Activated B cell treated with CpG ODN at 0.5 μM for 24 hours (primary cell): ENCODE measurements at regions of chr5 and their contacts with region 1.

Region 1: DNA sequence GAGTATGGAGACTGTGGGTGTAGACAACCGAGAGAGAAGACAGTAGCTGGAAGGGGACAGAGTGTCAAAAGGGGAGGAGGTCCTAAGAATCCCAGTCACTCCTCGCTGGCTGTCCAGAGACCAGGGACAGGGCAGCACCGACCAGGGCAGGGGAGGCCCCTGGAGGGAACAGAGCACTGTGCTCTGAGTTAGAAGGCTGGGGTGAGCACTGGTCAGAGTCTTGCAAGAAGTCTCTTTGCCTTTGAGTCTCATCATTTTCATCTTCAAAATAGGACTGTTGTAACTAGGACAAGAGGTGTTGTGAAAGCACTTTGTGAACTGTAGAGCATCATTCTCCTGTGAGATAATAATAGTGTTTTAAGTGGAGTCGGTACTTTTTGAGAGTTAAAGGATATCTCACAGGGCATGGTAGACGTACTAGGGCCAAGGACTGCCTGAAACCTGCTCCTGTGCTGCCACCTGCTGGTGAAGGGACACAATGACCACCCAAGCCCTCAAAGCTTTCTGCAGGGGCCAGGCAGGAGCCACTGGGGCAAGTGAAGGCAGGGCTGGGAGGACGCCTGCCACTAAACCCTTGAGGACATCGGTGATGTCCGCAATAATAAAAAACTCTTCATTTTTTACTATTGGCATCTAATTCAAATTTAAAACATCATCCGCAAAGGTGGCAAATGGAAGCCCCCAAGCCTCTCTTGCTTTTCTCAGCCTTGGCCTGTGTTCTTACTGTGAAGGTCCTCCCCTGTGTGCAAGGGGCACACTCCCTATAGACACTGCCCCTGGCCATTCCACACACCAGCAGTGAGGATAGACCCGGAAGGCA is 28.2 kb downstream of the SLC6A7 start:
- DNase-seq: peak; percentile 66
- ATAC-seq: peak; percentile 96
- H3K4me3 Mint-ChIP-seq: no peak overlapping the region
- H3K27ac Mint-ChIP-seq: no peak overlapping the region
- H3K4me1 Mint-ChIP-seq: peaks cover 1% of the 10 kb centered on the region
- H3K27me3 Mint-ChIP-seq: peaks cover 15% of the 10 kb centered on the region
- CTCF ChIP-seq: no peak

Region 2: GRCh38 chr5:149990518-149991376 is 227.3 kb before region 1 on chr5:
- CTCF ChIA-PET with region 1: interaction called, 5 read pairs
- POLR2A ChIA-PET with region 1: no interaction called
- intact Hi-C with region 1: loop called (anchors 2 kb)
- DNase-seq: peak; percentile 34
- ATAC-seq: peak; percentile 99
- H3K4me3 Mint-ChIP-seq: no peak overlapping the region
- H3K27ac Mint-ChIP-seq: no peak overlapping the region
- H3K4me1 Mint-ChIP-seq: no peaks in the 10 kb centered on the region
- H3K27me3 Mint-ChIP-seq: no peaks in the 10 kb centered on the region
- CTCF ChIP-seq: peak; percentile 95

Region 3: GRCh38 chr5:150129813-150130492 is 88.1 kb before region 1 on chr5:
- CTCF ChIA-PET with region 1: interaction called, 6 read pairs
- POLR2A ChIA-PET with region 1: no interaction called
- intact Hi-C with region 1: loop called (anchors 1 kb)
- DNase-seq: peak; percentile 29
- ATAC-seq: peak; percentile 84
- H3K4me3 Mint-ChIP-seq: no peak overlapping the region
- H3K27ac Mint-ChIP-seq: no peak overlapping the region
- H3K4me1 Mint-ChIP-seq: no peaks in the 10 kb centered on the region
- H3K27me3 Mint-ChIP-seq: no peaks in the 10 kb centered on the region
- CTCF ChIP-seq: peak; percentile 50

Region 4: GRCh38 chr5:150161242-150162141 is 56.6 kb before region 1 on chr5:
- CTCF ChIA-PET with region 1: interaction called, 3 read pairs
- POLR2A ChIA-PET with region 1: no interaction called
- intact Hi-C with region 1: loop called (anchors 1 kb)
- DNase-seq: peak; percentile 70
- ATAC-seq: peak; percentile 88
- H3K4me3 Mint-ChIP-seq: no peak overlapping the region
- H3K27ac Mint-ChIP-seq: no peak overlapping the region
- H3K4me1 Mint-ChIP-seq: peaks cover 19% of the 10 kb centered on the region
- H3K27me3 Mint-ChIP-seq: peaks cover 8% of the 10 kb centered on the region
- CTCF ChIP-seq: peak; percentile 65

Region 5: GRCh38 chr5:151298063-151298855 is 1080.2 kb after region 1 on chr5:
- CTCF ChIA-PET with region 1: no interaction called
- POLR2A ChIA-PET with region 1: no interaction called
- intact Hi-C with region 1: no loop called
- DNase-seq: no peak
- ATAC-seq: peak; percentile 58
- H3K4me3 Mint-ChIP-seq: no peak overlapping the region
- H3K27ac Mint-ChIP-seq: no peak overlapping the region
- H3K4me1 Mint-ChIP-seq: peaks cover 4% of the 10 kb centered on the region
- H3K27me3 Mint-ChIP-seq: peaks cover 15% of the 10 kb centered on the region
- CTCF ChIP-seq: no peak